Heart right ventricle (tissue), 16 donors: ENCODE measurements at regions of chr5 and their contacts with region 1.

Region 1: GRCh38 chr5:91219803-91220371 is 163.2 kb downstream of the ARRDC3 start:
- DNase-seq: no peak
- ATAC-seq: peak in 3 of 8 donors; percentile 35 to 68 (median 61)
- H3K4me3 ChIP-seq: no peak overlapping the region
- H3K27ac ChIP-seq: peak overlapping the region in 4 of 10 donors; percentile 25 to 86 (median 38)
- H3K4me1 ChIP-seq: peaks cover 0 to 21% (median 0%) of the 10 kb centered on the region in 9 donors
- H3K27me3 ChIP-seq: no peaks in the 10 kb centered on the region
- CTCF ChIP-seq: peak in 7 of 9 donors; percentile 33 to 58 (median 44)

Region 2: GRCh38 chr5:91126448-91126847 is 93.4 kb before region 1 on chr5:
- intact Hi-C with region 1: loop called in 1 of 10 experiments (anchors 10 kb)
- DNase-seq: no peak
- ATAC-seq: peak; percentile 46 to 60 (median 54)
- H3K4me3 ChIP-seq: no peak overlapping the region
- H3K27ac ChIP-seq: peak overlapping the region in 8 of 10 donors; percentile 10 to 86 (median 54)
- H3K4me1 ChIP-seq: peaks cover 5 to 69% (median 38%) of the 10 kb centered on the region in 9 donors
- H3K27me3 ChIP-seq: no peaks in the 10 kb centered on the region
- CTCF ChIP-seq: no peak

Region 3: GRCh38 chr5:91183737-91184136 is 36.1 kb before region 1 on chr5:
- intact Hi-C with region 1: no loop called
- DNase-seq: peak in 1 of 2 donors; percentile 11
- ATAC-seq: no peak
- H3K4me3 ChIP-seq: no peak overlapping the region
- H3K27ac ChIP-seq: peak overlapping the region in 4 of 10 donors; percentile 17 to 84 (median 36)
- H3K4me1 ChIP-seq: peaks cover 0 to 40% (median 0%) of the 10 kb centered on the region in 9 donors
- H3K27me3 ChIP-seq: no peaks in the 10 kb centered on the region
- CTCF ChIP-seq: no peak

Region 4: GRCh38 chr5:91352831-91353695 is 133.2 kb after region 1 on chr5:
- intact Hi-C with region 1: no loop called
- DNase-seq: no peak
- ATAC-seq: no peak
- H3K4me3 ChIP-seq: no peak overlapping the region
- H3K27ac ChIP-seq: no peak overlapping the region
- H3K4me1 ChIP-seq: peaks cover 0 to 14% (median 0%) of the 10 kb centered on the region in 9 donors
- H3K27me3 ChIP-seq: no peaks in the 10 kb centered on the region
- CTCF ChIP-seq: no peak